GM13976 (cell line): ENCODE measurements at regions of chr18 and their contacts with region 1.

Region 1: GRCh38 chr18:6543330-6543908 is 128.7 kb upstream of the L3MBTL4 start:
- DNase-seq: peak; percentile 21
- CTCF ChIP-seq: peak; percentile 13

Region 2: GRCh38 chr18:5600378-5601071 is 942.9 kb before region 1 on chr18:
- in situ Hi-C with region 1: loop called (anchors 25 kb)
- DNase-seq: no peak
- CTCF ChIP-seq: no peak

Region 3: DNA sequence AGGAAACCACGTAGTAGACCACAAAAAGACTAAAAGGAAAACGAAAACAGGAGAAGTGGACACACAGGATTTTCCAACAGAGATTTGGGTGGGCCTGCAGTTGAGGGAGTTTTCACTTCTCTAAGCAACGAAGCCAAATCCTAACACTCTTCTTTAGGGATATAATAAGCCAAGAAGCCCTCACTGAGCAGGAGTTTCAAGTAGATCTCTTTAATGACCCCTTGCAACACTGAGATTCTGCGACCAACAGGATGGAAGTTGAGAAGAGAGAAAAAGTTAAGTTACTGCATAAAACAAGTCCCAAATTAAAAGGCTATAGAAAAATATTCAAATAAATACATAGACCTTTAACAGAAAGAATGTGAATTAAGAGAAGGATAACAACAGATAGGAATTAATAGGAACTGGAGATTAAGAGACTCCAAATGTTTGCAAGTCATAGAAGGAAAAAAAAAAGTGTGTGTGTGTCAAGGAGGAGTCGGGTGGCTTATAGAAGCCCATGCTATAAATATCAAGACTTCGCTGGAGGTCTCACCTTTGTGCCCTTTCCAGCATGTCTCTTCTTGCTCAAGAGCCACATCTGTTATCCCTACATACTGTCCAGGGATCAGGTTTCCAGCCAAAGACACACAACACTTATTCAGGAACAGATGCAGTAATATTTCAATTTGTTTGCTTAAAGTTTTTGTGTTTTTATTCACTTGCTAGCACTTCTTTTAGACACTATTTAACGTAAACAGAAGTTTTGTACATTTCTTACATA is 116.7 kb after region 1 on chr18:
- in situ Hi-C with region 1: loop called (anchors 25 kb)
- DNase-seq: no peak
- CTCF ChIP-seq: no peak

Region 4: GRCh38 chr18:6752202-6752860 is 208.9 kb after region 1 on chr18:
- in situ Hi-C with region 1: loop called (anchors 25 kb)
- DNase-seq: no peak
- CTCF ChIP-seq: no peak

Region 5: GRCh38 chr18:6885992-6886796 is 342.8 kb after region 1 on chr18:
- in situ Hi-C with region 1: loop called (anchors 25 kb)
- DNase-seq: peak; percentile 42
- CTCF ChIP-seq: peak; percentile 52